Spleen (tissue), 13 donors: ENCODE measurements at regions of chr10 and their contacts with region 1.

Region 1: GRCh38 chr10:60434418-60435046 is 44.9 kb upstream of the ANK3 start:
- DNase-seq: no peak
- H3K4me3 ChIP-seq: no peak overlapping the region
- H3K27ac ChIP-seq: no peak overlapping the region
- H3K4me1 ChIP-seq: peaks cover 0 to 8% (median 5%) of the 10 kb centered on the region in 6 donors
- H3K27me3 ChIP-seq: no peaks in the 10 kb centered on the region
- CTCF ChIP-seq: peak in 10 of 11 experiments; percentile 18 to 71 (median 60)
- POLR2A ChIP-seq: no peak

Region 2: DNA sequence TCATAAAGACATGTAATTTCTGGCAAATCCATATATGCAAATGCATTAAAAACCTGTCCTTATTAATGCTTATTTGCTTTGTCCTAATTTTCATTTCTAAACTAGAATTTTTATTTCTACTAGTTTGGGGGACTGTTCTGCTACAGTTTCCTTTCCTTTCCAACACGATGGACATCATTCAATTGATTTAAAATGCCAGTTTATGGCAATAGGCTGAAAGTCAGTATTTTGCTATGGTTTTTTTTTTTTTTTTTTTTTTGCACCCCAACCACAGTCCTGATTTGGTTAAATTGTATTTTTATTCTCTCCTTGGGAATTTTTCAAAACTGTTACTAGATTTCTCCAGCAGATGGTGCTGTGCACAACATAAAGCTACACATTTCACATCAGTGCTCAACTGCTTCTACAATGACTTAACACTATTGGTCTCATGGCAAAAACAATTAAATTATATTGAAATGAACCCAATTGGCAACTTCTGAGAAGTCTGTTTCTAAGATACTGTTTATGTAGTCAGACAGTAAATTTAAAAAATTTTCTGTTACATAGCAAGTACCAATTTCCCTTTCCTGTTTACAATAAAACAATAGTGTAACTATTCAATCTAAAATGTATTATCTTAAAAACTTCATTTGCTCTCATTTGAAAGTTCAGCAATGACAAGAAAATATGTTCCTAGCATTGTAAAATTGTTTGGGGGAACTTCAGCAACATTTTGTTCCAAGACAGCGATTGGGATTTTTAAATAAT is 334.4 kb before region 1 on chr10:
- intact Hi-C with region 1: loop called (anchors 5 kb)
- DNase-seq: no peak
- H3K4me3 ChIP-seq: no peak overlapping the region
- H3K27ac ChIP-seq: no peak overlapping the region
- H3K4me1 ChIP-seq: no peaks in the 10 kb centered on the region
- H3K27me3 ChIP-seq: no peaks in the 10 kb centered on the region
- CTCF ChIP-seq: peak in 9 of 11 experiments; percentile 32 to 67 (median 54)
- POLR2A ChIP-seq: no peak

Region 3: GRCh38 chr10:60208676-60209269 is 225.8 kb before region 1 on chr10:
- intact Hi-C with region 1: loop called (anchors 10 kb)
- DNase-seq: no peak
- H3K4me3 ChIP-seq: no peak overlapping the region
- H3K27ac ChIP-seq: no peak overlapping the region
- H3K4me1 ChIP-seq: peaks cover 0 to 12% (median 8%) of the 10 kb centered on the region in 6 donors
- H3K27me3 ChIP-seq: no peaks in the 10 kb centered on the region
- CTCF ChIP-seq: peak in 10 of 11 experiments; percentile 10 to 63 (median 42)
- POLR2A ChIP-seq: no peak